ENCODE measurements at regions of chr10 and their contacts with region 1.

Region 1: DNA sequence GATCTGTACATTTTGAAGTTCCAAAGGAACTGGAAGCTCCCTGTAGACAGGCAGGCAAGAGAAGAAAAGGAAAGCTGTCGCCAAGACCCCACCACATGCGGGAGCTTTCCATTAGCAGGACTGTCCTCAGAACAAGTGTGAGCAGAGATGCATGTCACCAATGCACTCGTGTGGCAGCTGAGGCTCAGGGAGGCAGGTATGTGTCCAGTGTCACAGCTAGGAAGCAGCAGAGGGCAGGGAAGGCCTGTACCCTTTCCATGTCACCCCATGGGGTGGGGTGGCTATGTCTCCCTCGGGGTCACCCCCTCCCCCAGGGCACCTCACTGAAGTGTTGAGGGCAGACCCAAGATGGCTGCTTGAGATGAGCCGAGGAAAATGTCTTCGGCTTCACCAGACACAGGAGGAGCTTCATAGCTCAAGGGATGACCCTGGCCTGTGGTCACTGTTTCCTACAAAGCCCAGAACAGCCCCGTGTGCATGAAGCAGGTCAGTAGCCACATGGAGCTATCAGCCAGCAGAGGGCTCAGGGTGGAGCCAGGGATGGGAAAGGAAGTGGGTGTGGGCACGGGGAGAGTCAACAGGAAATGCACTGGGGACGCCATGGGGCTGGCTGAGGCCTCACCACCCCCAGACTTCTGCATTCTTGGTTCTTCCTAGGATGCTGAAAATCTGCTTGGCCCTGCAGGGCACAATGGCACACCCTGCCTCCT is 96.6 kb downstream of the FAM53B start:
- DNase-seq: peak in 8 of 9 donors; percentile 63 to 79 (median 72)
- ATAC-seq: peak; percentile 85
- H3K4me3 ChIP-seq: peak overlapping the region; percentile 34
- H3K4me3 Mint-ChIP-seq: peak overlapping the region; percentile 69 to 87 (median 80)
- H3K27ac ChIP-seq: peak overlapping the region; percentile 62
- H3K27ac Mint-ChIP-seq: peak overlapping the region; percentile 86 to 97 (median 95)
- H3K4me1 ChIP-seq: peaks cover 68 to 79% of the 10 kb centered on the region in 2 donors
- H3K4me1 Mint-ChIP-seq: peaks cover 46 to 100% (median 87%) of the 10 kb centered on the region in 7 donors
- H3K27me3 ChIP-seq: no peaks in the 10 kb centered on the region
- H3K27me3 Mint-ChIP-seq: no peaks in the 10 kb centered on the region

Region 2: DNA sequence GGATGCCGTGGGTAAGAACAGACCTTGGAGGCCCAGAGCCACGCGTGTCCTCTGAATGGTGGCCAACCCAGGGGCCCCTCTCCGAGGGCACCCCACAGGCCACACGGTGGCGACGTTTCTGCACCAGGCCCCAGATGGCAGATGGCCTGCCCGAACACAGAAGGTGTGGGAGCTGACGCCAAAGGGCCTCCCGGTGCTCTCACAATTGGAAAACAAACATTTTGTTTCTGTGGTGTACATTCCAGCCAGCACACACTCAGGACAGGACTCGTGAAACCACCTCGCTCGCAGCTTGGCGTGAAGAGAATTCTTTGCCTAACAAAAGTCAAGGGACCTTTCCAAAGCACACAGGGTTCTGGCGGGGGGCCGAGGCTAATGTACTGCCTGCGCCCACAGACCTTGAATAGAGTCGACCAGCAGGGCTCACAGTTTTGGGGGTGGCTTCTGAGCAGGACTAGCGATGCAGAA is 15.5 kb before region 1 on chr10:
- CTCF ChIA-PET with region 1: interaction called, 19 read pairs
- POLR2A ChIA-PET with region 1: interaction called, 13 read pairs
- intact Hi-C with region 1: loop called in 1 of 2 experiments (anchors 2 kb)
- DNase-seq: peak in 2 of 9 donors; percentile 36 to 51
- ATAC-seq: peak; percentile 43
- H3K4me3 ChIP-seq: no peak overlapping the region
- H3K4me3 Mint-ChIP-seq: peak overlapping the region in 1 of 10 donors; percentile 7
- H3K27ac ChIP-seq: no peak overlapping the region
- H3K27ac Mint-ChIP-seq: peak overlapping the region in 2 of 9 donors; percentile 40 to 53
- H3K4me1 ChIP-seq: peaks cover 25 to 47% of the 10 kb centered on the region in 2 donors
- H3K4me1 Mint-ChIP-seq: peaks cover 29 to 78% (median 67%) of the 10 kb centered on the region in 7 donors
- H3K27me3 ChIP-seq: no peaks in the 10 kb centered on the region
- H3K27me3 Mint-ChIP-seq: peaks cover 0 to 8% (median 0%) of the 10 kb centered on the region in 5 donors

Region 3: DNA sequence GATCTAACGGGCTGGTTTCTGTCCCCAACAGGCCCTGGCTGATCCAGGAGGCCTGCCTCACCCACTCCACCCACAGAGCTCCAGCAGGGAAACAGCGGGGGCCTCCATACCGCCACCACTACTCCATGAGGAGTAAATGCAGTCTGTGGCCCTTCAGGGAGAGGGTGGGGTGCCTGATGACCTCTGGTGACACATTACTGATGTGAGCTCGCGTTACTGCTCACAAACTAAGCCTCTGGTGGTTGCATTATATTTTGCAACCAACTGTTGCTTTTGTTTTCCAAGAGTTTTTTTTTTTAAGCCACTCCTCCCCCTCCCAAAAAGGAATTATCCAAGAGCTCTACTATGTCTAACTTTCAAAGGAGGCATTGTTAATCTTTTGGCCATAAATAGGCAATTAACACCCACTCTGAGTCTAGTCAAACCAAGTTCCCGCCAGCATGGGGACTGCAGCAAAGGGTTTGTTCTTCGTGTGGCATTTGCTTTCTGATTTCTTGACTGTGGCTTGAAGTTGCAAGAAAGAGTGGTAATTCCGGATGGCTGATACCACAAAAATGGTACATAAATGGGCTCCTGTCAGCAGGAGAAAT is 24.0 kb after region 1 on chr10:
- CTCF ChIA-PET with region 1: interaction called, 4 read pairs
- POLR2A ChIA-PET with region 1: interaction called, 74 read pairs
- intact Hi-C with region 1: no loop called
- DNase-seq: peak in 5 of 9 donors; percentile 31 to 60 (median 48)
- ATAC-seq: peak; percentile 71
- H3K4me3 ChIP-seq: peak overlapping the region; percentile 34
- H3K4me3 Mint-ChIP-seq: peak overlapping the region in 9 of 10 donors; percentile 55 to 93 (median 73)
- H3K27ac ChIP-seq: peak overlapping the region; percentile 19
- H3K27ac Mint-ChIP-seq: peak overlapping the region; percentile 23 to 93 (median 89)
- H3K4me1 ChIP-seq: peaks cover 83 to 97% of the 10 kb centered on the region in 2 donors
- H3K4me1 Mint-ChIP-seq: peaks cover 40 to 92% (median 82%) of the 10 kb centered on the region in 7 donors
- H3K27me3 ChIP-seq: no peaks in the 10 kb centered on the region
- H3K27me3 Mint-ChIP-seq: no peaks in the 10 kb centered on the region

Region 4: DNA sequence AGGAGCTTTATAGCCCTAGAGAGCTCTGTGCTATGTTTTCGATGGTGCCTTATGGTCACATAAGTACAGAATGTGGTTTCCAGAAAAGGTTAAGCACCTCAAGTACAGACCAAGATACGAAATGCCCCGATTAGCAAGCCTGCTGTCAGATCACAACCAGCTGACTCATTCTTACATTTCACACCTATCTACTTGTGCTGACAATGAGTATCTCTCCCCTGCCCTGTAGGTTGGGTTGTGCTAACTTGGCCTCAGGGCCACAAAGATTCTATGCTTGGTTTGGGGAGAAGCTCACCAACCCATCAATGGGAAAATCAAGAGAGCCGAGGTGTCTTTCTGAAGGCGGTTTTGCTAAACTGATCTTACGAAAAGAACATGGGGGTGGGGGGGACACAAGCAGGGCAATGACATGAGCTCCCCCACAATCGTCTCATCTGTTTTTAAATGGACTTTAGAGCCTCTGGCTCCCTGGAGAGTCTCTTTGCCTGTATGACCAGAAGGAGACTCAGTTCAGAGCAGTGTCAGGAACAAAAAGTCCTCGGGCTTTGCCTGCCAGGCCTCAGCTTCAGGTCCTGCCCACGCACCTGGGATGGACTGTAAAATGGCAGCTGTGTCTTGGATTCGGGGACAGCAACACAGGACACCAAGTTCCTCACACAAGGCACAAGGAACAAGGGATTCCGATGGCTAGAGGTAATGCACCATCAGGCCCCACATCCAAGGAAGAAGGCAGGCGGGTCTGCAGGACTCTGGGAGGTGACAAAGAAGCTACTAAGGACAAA is 41.5 kb after region 1 on chr10:
- CTCF ChIA-PET with region 1: interaction called, 6 read pairs
- POLR2A ChIA-PET with region 1: interaction called, 40 read pairs
- intact Hi-C with region 1: loop called in 1 of 2 experiments (anchors 2 kb)
- DNase-seq: peak in 1 of 9 donors; percentile 61
- ATAC-seq: peak; percentile 87
- H3K4me3 ChIP-seq: no peak overlapping the region
- H3K4me3 Mint-ChIP-seq: peak overlapping the region in 1 of 10 donors; percentile 69
- H3K27ac ChIP-seq: no peak overlapping the region
- H3K27ac Mint-ChIP-seq: peak overlapping the region in 6 of 9 donors; percentile 15 to 88 (median 30)
- H3K4me1 ChIP-seq: peaks cover 24 to 90% of the 10 kb centered on the region in 2 donors
- H3K4me1 Mint-ChIP-seq: peaks cover 39 to 73% (median 49%) of the 10 kb centered on the region in 7 donors
- H3K27me3 ChIP-seq: no peaks in the 10 kb centered on the region
- H3K27me3 Mint-ChIP-seq: no peaks in the 10 kb centered on the region

Region 5: GRCh38 chr10:124703778-124704427 is 56.3 kb after region 1 on chr10:
- CTCF ChIA-PET with region 1: interaction called, 11 read pairs
- POLR2A ChIA-PET with region 1: interaction called, 6 read pairs
- intact Hi-C with region 1: no loop called
- DNase-seq: no peak
- ATAC-seq: no peak
- H3K4me3 ChIP-seq: no peak overlapping the region
- H3K4me3 Mint-ChIP-seq: peak overlapping the region in 7 of 10 donors; percentile 33 to 84 (median 60)
- H3K27ac ChIP-seq: peak overlapping the region; percentile 25
- H3K27ac Mint-ChIP-seq: peak overlapping the region; percentile 56 to 98 (median 92)
- H3K4me1 ChIP-seq: peaks cover 80 to 92% of the 10 kb centered on the region in 2 donors
- H3K4me1 Mint-ChIP-seq: peaks cover 80 to 98% (median 92%) of the 10 kb centered on the region in 7 donors
- H3K27me3 ChIP-seq: no peaks in the 10 kb centered on the region
- H3K27me3 Mint-ChIP-seq: no peaks in the 10 kb centered on the region

Region 6: GRCh38 chr10:124802313-124802675 is 154.7 kb after region 1 on chr10:
- CTCF ChIA-PET with region 1: no interaction called
- POLR2A ChIA-PET with region 1: no interaction called
- intact Hi-C with region 1: loop called in 1 of 2 experiments (anchors 10 kb)
- DNase-seq: peak in 1 of 9 donors; percentile 16
- ATAC-seq: peak; percentile 28
- H3K4me3 ChIP-seq: peak overlapping the region; percentile 97
- H3K4me3 Mint-ChIP-seq: peak overlapping the region; percentile 85 to 96 (median 88)
- H3K27ac ChIP-seq: peak overlapping the region; percentile 90
- H3K27ac Mint-ChIP-seq: peak overlapping the region; percentile 55 to 95 (median 88)
- H3K4me1 ChIP-seq: peaks cover 0 to 5% of the 10 kb centered on the region in 2 donors
- H3K4me1 Mint-ChIP-seq: peaks cover 9 to 24% (median 17%) of the 10 kb centered on the region in 7 donors
- H3K27me3 ChIP-seq: no peaks in the 10 kb centered on the region
- H3K27me3 Mint-ChIP-seq: peaks cover 0 to 12% (median 4%) of the 10 kb centered on the region in 5 donors

Measured in naive thymus-derived CD4-positive, alpha-beta T cell (primary cell).